CD8-positive, alpha-beta memory T cell (primary cell): ENCODE measurements at regions of chr6 and their contacts with region 1.

Region 1: GRCh38 chr6:116268589-116269293 is 11.0 kb downstream of the TSPYL1 start:
- DNase-seq: peak in 2 of 5 donors; percentile 44 to 48
- H3K4me3 ChIP-seq: no peak overlapping the region
- H3K4me3 Mint-ChIP-seq: no peak overlapping the region
- H3K27ac ChIP-seq: no peak overlapping the region
- H3K27ac Mint-ChIP-seq: peak overlapping the region in 7 of 8 donors; percentile 34 to 77 (median 64)
- H3K4me1 ChIP-seq: no peaks in the 10 kb centered on the region
- H3K4me1 Mint-ChIP-seq: peaks cover 27 to 58% (median 53%) of the 10 kb centered on the region in 3 donors
- H3K27me3 ChIP-seq: no peaks in the 10 kb centered on the region
- H3K27me3 Mint-ChIP-seq: peaks cover 0 to 1% of the 10 kb centered on the region in 2 donors

Region 2: GRCh38 chr6:116253505-116254296 is 15.0 kb before region 1 on chr6 and contains the start of gene TSPYL4:
- CTCF ChIA-PET with region 1: interaction called, 10 read pairs
- POLR2A ChIA-PET with region 1: interaction called, 3 read pairs
- DNase-seq: peak; percentile 88 to 96 (median 92)
- H3K4me3 ChIP-seq: peak within 1 kb of the TSS; percentile 87
- H3K4me3 Mint-ChIP-seq: no peak within 1 kb of the TSS
- H3K27ac ChIP-seq: peak within 1 kb of the TSS; percentile 95
- H3K27ac Mint-ChIP-seq: peak within 1 kb of the TSS in 1 of 8 donors; percentile 95
- H3K4me1 ChIP-seq: peaks cover 41% of the 10 kb centered on the region
- H3K4me1 Mint-ChIP-seq: peaks cover 7 to 30% (median 8%) of the 10 kb centered on the region in 3 donors
- H3K27me3 ChIP-seq: no peaks in the 10 kb centered on the region
- H3K27me3 Mint-ChIP-seq: no peaks in the 10 kb centered on the region
- total RNA-seq, gene TSPYL4: 19.3 to 19.9 TPM

Region 3: GRCh38 chr6:116287689-116288282 is 19.0 kb after region 1 on chr6:
- CTCF ChIA-PET with region 1: interaction called, 10 read pairs
- POLR2A ChIA-PET with region 1: no interaction called
- DNase-seq: peak in 2 of 5 donors; percentile 36 to 48
- H3K4me3 ChIP-seq: no peak overlapping the region
- H3K4me3 Mint-ChIP-seq: no peak overlapping the region
- H3K27ac ChIP-seq: no peak overlapping the region
- H3K27ac Mint-ChIP-seq: no peak overlapping the region
- H3K4me1 ChIP-seq: no peaks in the 10 kb centered on the region
- H3K4me1 Mint-ChIP-seq: no peaks in the 10 kb centered on the region
- H3K27me3 ChIP-seq: no peaks in the 10 kb centered on the region
- H3K27me3 Mint-ChIP-seq: no peaks in the 10 kb centered on the region

Region 4: GRCh38 chr6:116531675-116532570 is 263.2 kb after region 1 on chr6:
- CTCF ChIA-PET with region 1: interaction called, 12 read pairs
- POLR2A ChIA-PET with region 1: no interaction called
- DNase-seq: peak; percentile 24 to 72 (median 56)
- H3K4me3 ChIP-seq: no peak overlapping the region
- H3K4me3 Mint-ChIP-seq: no peak overlapping the region
- H3K27ac ChIP-seq: no peak overlapping the region
- H3K27ac Mint-ChIP-seq: no peak overlapping the region
- H3K4me1 ChIP-seq: no peaks in the 10 kb centered on the region
- H3K4me1 Mint-ChIP-seq: peaks cover 0 to 3% (median 0%) of the 10 kb centered on the region in 3 donors
- H3K27me3 ChIP-seq: peaks cover 9% of the 10 kb centered on the region
- H3K27me3 Mint-ChIP-seq: peaks cover 14 to 46% of the 10 kb centered on the region in 2 donors